GM10248 (cell line): ENCODE measurements at regions of chr5 and their contacts with region 1.

Region 1: GRCh38 chr5:149667084-149667828 is 62.9 kb upstream of the PPARGC1B start:
- DNase-seq: peak; percentile 60
- CTCF ChIP-seq: peak; percentile 76

Region 2: DNA sequence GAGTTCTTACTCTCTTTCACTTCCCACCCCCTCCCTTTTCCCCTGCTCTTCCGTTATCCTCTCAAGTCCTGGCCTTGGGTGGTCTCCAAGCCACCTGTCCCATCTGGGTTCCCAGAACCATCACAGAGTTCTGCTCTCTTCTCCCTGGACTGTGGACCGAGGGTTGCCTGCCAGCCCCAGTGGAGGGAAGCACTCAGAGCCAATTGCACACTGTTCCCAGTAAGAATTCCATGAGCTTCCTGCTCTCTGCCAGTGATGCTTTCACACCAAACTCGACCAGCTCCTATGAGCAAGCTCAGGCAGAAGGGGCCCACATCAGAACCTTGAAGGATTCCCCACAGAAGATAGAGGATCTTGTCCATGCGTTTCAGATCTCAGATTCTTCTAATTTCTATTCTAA is 415.7 kb before region 1 on chr5:
- CTCF ChIA-PET with region 1: no interaction called
- POLR2A ChIA-PET with region 1: no interaction called
- DNase-seq: no peak
- CTCF ChIP-seq: no peak

Region 3: DNA sequence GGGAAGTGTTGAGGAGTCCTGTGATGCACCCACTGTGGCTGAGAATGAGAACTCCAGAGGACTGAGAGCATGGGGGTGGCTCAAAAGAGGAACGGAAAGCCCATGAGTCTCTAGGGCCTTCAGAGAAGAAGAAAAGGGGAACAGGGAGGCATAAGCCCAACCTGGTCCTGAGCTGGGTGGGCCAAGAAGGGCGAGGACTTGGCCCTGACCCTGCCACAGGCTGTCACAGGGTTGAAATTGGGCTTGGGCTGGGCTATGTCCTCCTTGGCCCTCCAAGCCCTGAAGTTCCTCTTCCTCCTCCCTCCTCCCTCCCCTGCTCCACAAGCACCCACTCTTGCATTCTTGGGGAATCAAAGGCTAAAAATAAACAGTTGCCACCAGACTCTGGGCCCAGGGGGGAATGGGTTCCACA is 13.6 kb after region 1 on chr5:
- CTCF ChIA-PET with region 1: interaction called, 44 read pairs
- POLR2A ChIA-PET with region 1: no interaction called
- DNase-seq: peak; percentile 85
- CTCF ChIP-seq: no peak

Region 4: DNA sequence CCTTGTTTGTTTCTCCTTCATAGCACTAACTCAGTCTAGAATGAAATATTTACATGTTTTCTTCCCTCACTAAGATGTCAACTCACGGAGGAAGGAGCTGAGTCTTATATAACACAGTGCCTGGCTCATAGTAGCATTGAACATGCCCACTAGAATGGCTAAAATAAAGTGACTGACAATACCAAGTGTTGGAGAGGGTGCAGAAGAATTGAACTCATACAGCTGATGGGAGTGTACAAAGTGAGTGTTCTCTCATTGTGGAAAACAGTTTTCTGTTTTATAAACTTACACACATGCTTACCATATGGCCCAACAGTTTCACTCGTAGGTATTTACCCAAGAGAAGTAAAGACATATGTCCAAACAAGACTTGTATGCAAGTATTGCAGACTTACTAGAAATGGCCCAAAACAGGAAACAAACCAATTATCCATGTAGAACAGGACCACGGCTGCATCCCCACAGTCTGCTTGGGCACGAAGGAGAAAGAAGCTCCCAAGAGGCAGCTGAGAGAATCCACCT is 150.3 kb after region 1 on chr5:
- CTCF ChIA-PET with region 1: interaction called, 13 read pairs
- POLR2A ChIA-PET with region 1: no interaction called
- DNase-seq: no peak
- CTCF ChIP-seq: no peak

Region 5: DNA sequence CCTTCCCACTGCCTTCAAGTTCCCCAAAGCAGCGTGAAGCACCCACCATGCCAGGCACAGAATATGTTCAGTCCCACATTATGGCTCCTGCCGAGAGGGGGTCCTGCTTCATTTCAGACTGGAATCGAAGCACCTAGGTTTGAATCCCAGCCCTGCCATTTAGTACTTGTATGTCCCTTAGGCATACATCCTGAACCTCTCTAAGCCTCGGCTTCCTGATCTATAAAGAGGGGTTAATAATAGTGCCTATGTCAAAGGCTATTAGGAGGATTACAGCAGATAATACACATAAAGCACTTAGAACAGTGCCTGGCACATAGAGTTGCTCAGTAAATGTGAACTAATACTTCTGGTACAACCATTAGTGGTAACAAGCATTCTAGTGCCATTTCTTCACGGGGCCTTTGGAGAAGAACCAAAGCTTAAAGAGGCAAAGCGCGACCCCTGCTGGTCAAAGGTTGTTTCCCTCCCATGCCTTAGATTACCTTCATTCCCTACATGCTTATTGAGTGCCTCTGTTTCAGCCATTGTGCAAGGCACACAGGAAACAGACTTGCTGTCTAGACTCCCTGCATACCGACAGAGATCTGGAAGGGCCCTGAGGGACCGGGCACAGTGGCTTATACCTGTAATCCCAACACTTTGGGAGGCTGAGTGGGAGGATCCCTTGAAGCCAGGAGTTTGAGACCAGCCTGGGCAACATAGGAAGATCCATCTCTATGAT is 161.1 kb after region 1 on chr5:
- CTCF ChIA-PET with region 1: interaction called, 90 read pairs
- POLR2A ChIA-PET with region 1: no interaction called
- DNase-seq: peak; percentile 84
- CTCF ChIP-seq: peak; percentile 82

Region 6: DNA sequence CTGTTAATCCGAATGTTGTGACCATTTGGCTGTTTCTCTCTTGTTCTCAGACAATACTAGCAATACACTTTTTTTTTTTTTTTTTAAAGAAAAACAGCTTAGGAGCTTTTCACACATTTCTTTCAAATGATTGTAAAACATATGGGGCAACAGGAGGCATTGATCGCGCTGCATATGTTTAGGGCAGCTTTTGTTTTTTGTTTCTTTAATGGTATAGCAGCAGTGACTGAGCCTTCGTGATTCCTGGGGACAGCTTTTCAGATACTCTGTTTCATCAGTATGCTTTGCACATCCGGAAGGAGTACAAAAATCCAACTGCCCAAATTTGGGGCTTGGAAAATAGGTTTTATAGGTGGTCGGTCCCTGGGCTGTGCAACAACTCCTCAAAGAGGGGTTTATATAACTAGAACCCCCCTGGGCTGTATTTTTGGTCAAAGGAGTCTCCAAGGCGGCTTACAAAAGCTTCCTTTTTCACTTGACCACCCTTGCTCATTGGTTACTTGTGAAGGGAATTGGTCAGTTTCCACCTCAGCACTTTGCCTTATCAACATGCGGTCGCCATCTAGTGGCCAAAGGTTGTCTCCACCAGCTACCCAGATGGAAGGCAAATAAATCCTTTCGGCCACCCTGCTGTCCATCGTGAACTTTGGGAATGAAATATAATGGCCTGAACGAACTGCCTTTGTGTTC is 185.5 kb after region 1 on chr5:
- CTCF ChIA-PET with region 1: interaction called, 18 read pairs
- POLR2A ChIA-PET with region 1: no interaction called
- DNase-seq: peak; percentile 71
- CTCF ChIP-seq: peak; percentile 87